ENCODE measurements at regions of chr10 and their contacts with region 1.

Region 1: DNA sequence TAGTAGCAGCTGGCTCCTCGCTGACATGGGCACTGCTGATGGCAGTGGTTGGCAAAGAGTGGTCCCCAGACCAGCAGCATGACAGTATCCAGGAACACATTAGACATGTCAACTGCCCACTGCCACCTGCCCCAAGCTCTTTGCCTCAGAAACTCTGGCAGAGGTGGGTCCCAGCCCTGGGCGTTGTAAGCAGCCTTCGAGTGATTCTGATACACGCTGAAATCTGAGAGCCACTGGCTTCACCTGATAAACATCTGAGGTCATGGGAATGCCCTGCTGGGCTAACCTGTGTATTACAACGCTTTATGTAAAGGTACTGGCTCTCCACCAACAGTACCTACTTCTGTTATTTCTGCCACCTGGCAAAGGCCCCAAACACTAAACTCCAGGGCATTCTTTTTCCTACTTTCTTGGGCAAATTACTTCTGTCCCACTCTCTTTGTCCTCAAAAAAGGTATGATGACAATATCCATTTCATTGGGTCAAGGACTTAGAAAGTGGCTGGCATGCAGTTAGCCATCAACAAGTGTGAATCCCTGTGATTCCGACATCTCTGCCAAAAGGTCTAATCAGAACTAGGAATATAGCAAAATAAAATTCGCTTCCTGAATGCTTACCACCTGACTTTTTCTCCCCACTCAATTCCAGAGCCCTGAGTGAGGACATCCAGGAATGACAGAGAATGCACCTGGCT is 9.2 kb downstream of the SGMS1 start:
- DNase-seq: peak; percentile 50
- ATAC-seq: no peak
- H3K4me3 ChIP-seq: no peak overlapping the region
- H3K4me3 Mint-ChIP-seq: no peak overlapping the region
- H3K27ac ChIP-seq: no peak overlapping the region
- H3K27ac Mint-ChIP-seq: no peak overlapping the region
- H3K4me1 ChIP-seq: peaks cover 10 to 24% of the 10 kb centered on the region in 2 donors
- H3K4me1 Mint-ChIP-seq: peaks cover 63% of the 10 kb centered on the region
- H3K27me3 ChIP-seq: no peaks in the 10 kb centered on the region
- H3K27me3 Mint-ChIP-seq: no peaks in the 10 kb centered on the region
- CTCF ChIP-seq: peak; percentile 54

Region 2: DNA sequence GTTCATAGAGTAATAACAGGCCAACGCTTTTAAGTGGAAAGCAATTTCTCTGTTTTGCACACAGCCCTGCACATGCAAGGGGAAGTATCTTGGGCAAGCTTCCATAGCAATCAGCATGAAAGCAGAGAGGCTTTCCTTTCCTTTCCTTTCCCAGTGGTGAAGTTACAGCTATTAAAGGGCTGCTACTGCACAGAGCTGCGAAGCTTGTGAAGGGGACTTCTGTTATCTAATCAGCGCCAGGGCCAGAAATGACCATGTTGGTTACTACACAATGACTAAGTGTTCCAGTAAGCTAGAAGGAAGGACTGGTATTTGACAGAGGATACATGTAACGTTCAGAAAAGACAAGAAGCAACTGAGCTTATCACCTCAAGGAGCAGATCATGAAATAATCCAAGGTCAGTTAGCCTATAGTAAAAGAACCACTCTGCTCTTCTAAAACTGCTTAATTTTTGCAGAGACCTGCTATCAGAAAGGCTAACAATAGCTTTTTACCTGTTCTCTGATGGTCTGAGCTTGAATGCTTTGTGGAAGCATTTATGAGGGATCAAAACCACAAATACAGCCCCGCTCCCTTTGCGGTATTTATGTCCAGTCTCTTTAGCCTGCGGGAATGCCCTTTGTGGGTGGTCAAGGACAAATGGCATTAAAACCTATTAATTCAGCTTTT is 36.8 kb before region 1 on chr10:
- CTCF ChIA-PET with region 1: interaction called, 3 read pairs
- POLR2A ChIA-PET with region 1: no interaction called
- intact Hi-C with region 1: loop called (anchors 5 kb)
- DNase-seq: peak; percentile 12
- ATAC-seq: no peak
- H3K4me3 ChIP-seq: no peak overlapping the region
- H3K4me3 Mint-ChIP-seq: peak overlapping the region; percentile 17
- H3K27ac ChIP-seq: peak overlapping the region in 1 of 2 donors; percentile 52
- H3K27ac Mint-ChIP-seq: peak overlapping the region; percentile 17
- H3K4me1 ChIP-seq: peaks cover 25 to 36% of the 10 kb centered on the region in 2 donors
- H3K4me1 Mint-ChIP-seq: peaks cover 82% of the 10 kb centered on the region
- H3K27me3 ChIP-seq: no peaks in the 10 kb centered on the region
- H3K27me3 Mint-ChIP-seq: no peaks in the 10 kb centered on the region
- CTCF ChIP-seq: no peak

Region 3: DNA sequence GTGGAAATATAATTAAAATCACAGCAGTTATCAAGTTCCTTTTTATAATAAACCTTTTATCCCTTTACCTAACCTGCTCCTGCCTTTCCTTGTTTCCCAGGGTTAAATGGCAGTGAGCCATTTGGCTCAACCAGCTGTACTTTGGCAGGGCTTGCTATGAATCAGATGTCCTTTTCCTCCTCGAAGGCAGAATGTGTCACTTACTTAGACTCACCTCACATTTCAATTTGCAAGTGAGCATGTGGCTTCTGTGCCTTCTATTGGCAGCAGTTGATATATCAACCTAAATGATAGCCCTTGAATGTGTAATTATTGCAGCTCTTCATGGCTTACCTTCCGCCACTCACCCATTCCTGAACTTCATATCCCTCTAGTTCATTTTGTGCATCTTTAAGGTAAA is 783.1 kb after region 1 on chr10:
- CTCF ChIA-PET with region 1: no interaction called
- POLR2A ChIA-PET with region 1: no interaction called
- intact Hi-C with region 1: no loop called
- DNase-seq: no peak
- ATAC-seq: no peak
- H3K4me3 ChIP-seq: no peak overlapping the region
- H3K4me3 Mint-ChIP-seq: no peak overlapping the region
- H3K27ac ChIP-seq: no peak overlapping the region
- H3K27ac Mint-ChIP-seq: no peak overlapping the region
- H3K4me1 ChIP-seq: no peaks in the 10 kb centered on the region
- H3K4me1 Mint-ChIP-seq: no peaks in the 10 kb centered on the region
- H3K27me3 ChIP-seq: no peaks in the 10 kb centered on the region
- H3K27me3 Mint-ChIP-seq: no peaks in the 10 kb centered on the region
- CTCF ChIP-seq: no peak